CD8-positive, alpha-beta memory T cell (primary cell): ENCODE measurements at regions of chr14 and their contacts with region 1.

Region 1: GRCh38 chr14:50060871-50061663 is 55.3 kb downstream of the VCPKMT start:
- DNase-seq: peak in 4 of 5 donors; percentile 32 to 57 (median 43)
- H3K4me3 ChIP-seq: peak overlapping the region; percentile 61
- H3K4me3 Mint-ChIP-seq: peak overlapping the region; percentile 77 to 96 (median 90)
- H3K27ac ChIP-seq: peak overlapping the region; percentile 93
- H3K27ac Mint-ChIP-seq: peak overlapping the region; percentile 89 to 100 (median 99)
- H3K4me1 ChIP-seq: peaks cover 73% of the 10 kb centered on the region
- H3K4me1 Mint-ChIP-seq: peaks cover 71 to 94% (median 88%) of the 10 kb centered on the region in 3 donors
- H3K27me3 ChIP-seq: no peaks in the 10 kb centered on the region
- H3K27me3 Mint-ChIP-seq: no peaks in the 10 kb centered on the region

Region 2: DNA sequence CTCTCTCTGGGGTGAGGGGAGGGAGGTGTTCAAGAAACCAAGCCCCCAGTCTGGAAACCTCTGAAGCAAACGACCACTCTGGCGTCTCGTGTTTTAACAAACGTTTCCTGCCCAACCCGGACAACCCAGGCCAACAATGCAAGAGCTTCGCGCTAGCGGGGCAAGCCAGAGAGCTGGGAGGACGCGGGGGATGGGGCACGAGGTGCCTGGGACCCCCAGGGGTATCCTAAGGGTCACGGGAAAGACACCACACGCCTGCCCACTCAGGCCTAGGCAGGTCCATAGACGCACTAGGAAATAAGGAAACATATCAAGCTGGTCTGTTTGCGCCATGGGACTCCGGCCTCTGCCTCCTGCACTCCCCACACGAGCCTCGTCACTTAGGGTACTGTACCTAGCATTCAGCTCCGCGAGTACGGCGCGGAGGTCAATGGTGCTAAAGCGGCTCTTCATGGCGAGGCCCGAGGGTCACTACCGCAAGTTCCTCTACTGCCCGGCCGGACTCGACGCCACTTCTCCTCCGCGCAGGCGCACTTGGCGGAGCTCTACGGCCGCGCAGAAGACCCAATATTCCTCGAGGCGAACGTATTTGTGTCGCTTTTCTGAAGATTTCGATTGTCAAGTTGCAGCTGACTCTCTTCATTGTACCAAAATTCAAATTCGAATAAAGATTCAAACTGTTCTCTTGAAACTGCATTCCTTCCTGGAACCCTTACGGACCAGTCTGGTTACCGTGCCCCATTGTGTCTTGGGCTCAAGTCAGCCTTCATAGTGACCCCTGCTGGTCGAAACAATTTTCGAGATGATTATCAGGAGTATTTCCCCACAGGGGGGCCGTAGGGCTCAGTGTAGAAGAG is 208.5 kb before region 1 on chr14 and contains the start of gene NEMF:
- CTCF ChIA-PET with region 1: interaction called, 25 read pairs
- POLR2A ChIA-PET with region 1: interaction called, 10 read pairs
- DNase-seq: peak; percentile 59 to 82 (median 72)
- H3K4me3 ChIP-seq: peak within 1 kb of the TSS; percentile 93
- H3K4me3 Mint-ChIP-seq: peak within 1 kb of the TSS; percentile 94 to 99 (median 96)
- H3K27ac ChIP-seq: peak within 1 kb of the TSS; percentile 79
- H3K27ac Mint-ChIP-seq: peak within 1 kb of the TSS; percentile 83 to 99 (median 96)
- H3K4me1 ChIP-seq: peaks cover 28% of the 10 kb centered on the region
- H3K4me1 Mint-ChIP-seq: peaks cover 40 to 51% (median 50%) of the 10 kb centered on the region in 3 donors
- H3K27me3 ChIP-seq: no peaks in the 10 kb centered on the region
- H3K27me3 Mint-ChIP-seq: no peaks in the 10 kb centered on the region
- total RNA-seq, gene NEMF: 69.2 to 71.9 TPM

Region 3: GRCh38 chr14:49879683-49880204 is 181.3 kb before region 1 on chr14:
- CTCF ChIA-PET with region 1: interaction called, 17 read pairs
- POLR2A ChIA-PET with region 1: interaction called, 3 read pairs
- DNase-seq: peak in 4 of 5 donors; percentile 34 to 72 (median 56)
- H3K4me3 ChIP-seq: no peak overlapping the region
- H3K4me3 Mint-ChIP-seq: no peak overlapping the region
- H3K27ac ChIP-seq: no peak overlapping the region
- H3K27ac Mint-ChIP-seq: peak overlapping the region in 6 of 8 donors; percentile 36 to 96 (median 62)
- H3K4me1 ChIP-seq: peaks cover 11% of the 10 kb centered on the region
- H3K4me1 Mint-ChIP-seq: peaks cover 3 to 12% (median 10%) of the 10 kb centered on the region in 3 donors
- H3K27me3 ChIP-seq: no peaks in the 10 kb centered on the region
- H3K27me3 Mint-ChIP-seq: no peaks in the 10 kb centered on the region

Region 4: DNA sequence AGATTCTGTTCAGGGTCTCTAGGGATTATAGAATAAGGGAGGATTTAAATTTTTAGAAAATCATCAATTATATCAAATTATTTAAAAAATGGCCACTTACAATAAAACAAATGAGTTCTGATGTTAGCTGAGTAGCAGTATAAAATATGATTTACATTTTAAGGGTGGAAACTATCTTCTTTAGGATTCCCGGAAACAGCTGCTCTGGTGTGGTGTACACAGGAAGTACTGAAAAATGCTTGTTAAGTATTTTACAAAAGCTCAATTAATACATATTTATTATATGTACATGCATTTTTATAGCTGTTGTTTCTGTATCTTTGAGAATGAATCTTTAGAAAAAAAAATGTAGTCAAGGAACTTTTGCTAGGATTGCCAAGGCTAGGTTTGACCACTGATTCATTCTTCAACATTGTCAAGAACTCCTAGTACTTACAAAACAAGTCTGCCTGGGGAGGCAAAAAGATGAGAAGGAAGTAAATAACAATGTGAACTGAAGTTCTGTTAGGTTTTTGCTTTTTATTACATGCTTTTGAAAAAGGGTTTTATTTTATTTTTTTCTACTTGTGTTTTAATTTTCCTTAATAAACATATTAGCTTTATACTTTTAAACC is 120.2 kb before region 1 on chr14:
- CTCF ChIA-PET with region 1: interaction called, 10 read pairs
- POLR2A ChIA-PET with region 1: interaction called, 4 read pairs
- DNase-seq: peak in 3 of 5 donors; percentile 31 to 61 (median 35)
- H3K4me3 ChIP-seq: no peak overlapping the region
- H3K4me3 Mint-ChIP-seq: peak overlapping the region in 6 of 7 donors; percentile 54 to 77 (median 64)
- H3K27ac ChIP-seq: no peak overlapping the region
- H3K27ac Mint-ChIP-seq: peak overlapping the region; percentile 5 to 95 (median 78)
- H3K4me1 ChIP-seq: peaks cover 44% of the 10 kb centered on the region
- H3K4me1 Mint-ChIP-seq: peaks cover 55 to 76% (median 65%) of the 10 kb centered on the region in 3 donors
- H3K27me3 ChIP-seq: no peaks in the 10 kb centered on the region
- H3K27me3 Mint-ChIP-seq: no peaks in the 10 kb centered on the region

Region 5: DNA sequence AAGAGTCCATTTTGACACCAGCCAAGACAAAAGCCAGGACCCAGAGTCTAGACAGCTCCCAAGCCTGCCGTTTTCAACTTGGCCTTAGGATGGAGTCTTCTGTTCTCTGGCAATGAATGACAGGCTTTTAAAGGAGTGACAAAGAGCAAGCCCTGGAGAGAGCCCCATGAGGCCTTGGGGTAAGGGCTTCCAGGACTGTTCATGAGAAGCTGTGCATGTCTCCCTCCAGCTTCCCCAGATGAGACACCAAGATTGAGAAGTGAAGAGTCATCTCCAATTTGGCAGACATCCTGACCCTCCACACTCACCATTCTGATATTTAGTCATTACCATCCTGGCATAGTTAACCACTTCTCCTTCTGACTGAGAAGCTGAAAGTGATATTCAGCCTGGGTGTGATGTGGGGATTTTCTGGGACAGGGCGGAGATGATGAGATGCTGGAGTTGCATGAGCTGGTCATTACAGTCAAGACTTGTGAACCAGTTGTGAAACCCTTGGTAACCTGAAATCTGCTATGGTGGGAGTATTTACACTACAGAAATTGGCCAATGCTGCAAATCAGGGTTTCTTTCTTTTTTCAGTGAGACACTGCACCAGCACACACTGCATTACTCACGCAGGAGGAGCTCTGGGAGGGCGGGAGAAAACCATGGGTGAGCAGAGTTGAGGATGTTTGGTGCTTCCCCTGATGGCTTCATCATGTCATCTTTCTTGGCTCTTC is 22.5 kb before region 1 on chr14:
- CTCF ChIA-PET with region 1: interaction called, 12 read pairs
- POLR2A ChIA-PET with region 1: interaction called, 22 read pairs
- DNase-seq: peak in 1 of 5 donors; percentile 56
- H3K4me3 ChIP-seq: no peak overlapping the region
- H3K4me3 Mint-ChIP-seq: peak overlapping the region; percentile 32 to 87 (median 66)
- H3K27ac ChIP-seq: no peak overlapping the region
- H3K27ac Mint-ChIP-seq: peak overlapping the region; percentile 87 to 99 (median 94)
- H3K4me1 ChIP-seq: peaks cover 53% of the 10 kb centered on the region
- H3K4me1 Mint-ChIP-seq: peaks cover 48 to 67% (median 56%) of the 10 kb centered on the region in 3 donors
- H3K27me3 ChIP-seq: no peaks in the 10 kb centered on the region
- H3K27me3 Mint-ChIP-seq: no peaks in the 10 kb centered on the region

Region 6: GRCh38 chr14:50085570-50086320 is 24.7 kb after region 1 on chr14:
- CTCF ChIA-PET with region 1: interaction called, 42 read pairs
- POLR2A ChIA-PET with region 1: interaction called, 63 read pairs
- DNase-seq: peak; percentile 21 to 54 (median 44)
- H3K4me3 ChIP-seq: peak overlapping the region; percentile 7
- H3K4me3 Mint-ChIP-seq: peak overlapping the region; percentile 6 to 89 (median 71)
- H3K27ac ChIP-seq: peak overlapping the region; percentile 35
- H3K27ac Mint-ChIP-seq: peak overlapping the region; percentile 89 to 99 (median 97)
- H3K4me1 ChIP-seq: peaks cover 93% of the 10 kb centered on the region
- H3K4me1 Mint-ChIP-seq: peaks cover 75 to 93% (median 86%) of the 10 kb centered on the region in 3 donors
- H3K27me3 ChIP-seq: no peaks in the 10 kb centered on the region
- H3K27me3 Mint-ChIP-seq: no peaks in the 10 kb centered on the region

Region 7: DNA sequence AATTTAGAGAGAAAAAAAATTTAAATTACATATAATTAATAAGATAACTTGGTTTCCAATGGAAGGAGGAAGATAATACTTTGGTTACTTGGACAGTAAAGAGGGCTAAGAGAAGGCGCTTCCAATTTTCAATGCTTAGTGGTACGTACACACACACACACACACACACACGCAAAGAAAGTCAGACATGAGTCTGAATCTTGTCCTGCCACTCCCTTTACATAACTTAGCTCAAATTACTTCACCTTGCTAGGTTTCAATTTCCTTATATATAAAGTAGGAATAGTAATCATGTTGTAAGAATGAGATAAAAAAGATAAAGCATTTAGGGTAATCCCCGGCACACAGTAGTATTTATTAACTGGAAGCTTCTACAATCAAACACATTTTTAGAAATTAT is 95.0 kb after region 1 on chr14:
- CTCF ChIA-PET with region 1: no interaction called
- POLR2A ChIA-PET with region 1: no interaction called
- DNase-seq: no peak
- H3K4me3 ChIP-seq: no peak overlapping the region
- H3K4me3 Mint-ChIP-seq: no peak overlapping the region
- H3K27ac ChIP-seq: no peak overlapping the region
- H3K27ac Mint-ChIP-seq: no peak overlapping the region
- H3K4me1 ChIP-seq: no peaks in the 10 kb centered on the region
- H3K4me1 Mint-ChIP-seq: no peaks in the 10 kb centered on the region
- H3K27me3 ChIP-seq: no peaks in the 10 kb centered on the region
- H3K27me3 Mint-ChIP-seq: no peaks in the 10 kb centered on the region